ENCODE measurements at regions of chr4 and their contacts with region 1.

Region 1: GRCh38 chr4:13627606-13628301 is at the start of gene BOD1L1:
- DNase-seq: peak; percentile 81 to 88
- H3K4me3 ChIP-seq: peak within 1 kb of the TSS; percentile 72
- H3K4me3 Mint-ChIP-seq: peak within 1 kb of the TSS; percentile 92
- H3K27ac Mint-ChIP-seq: peak within 1 kb of the TSS; percentile 76
- H3K4me1 ChIP-seq: 0 out of 2 replicates have a peak, but pooled peaks cover 5% of the 10 kb centered on the region
- H3K4me1 Mint-ChIP-seq: peaks cover 8% of the 10 kb centered on the region
- H3K27me3 ChIP-seq: no peaks in the 10 kb centered on the region
- H3K27me3 Mint-ChIP-seq: no peaks in the 10 kb centered on the region
- CTCF ChIP-seq: peak in 1 of 2 experiments; percentile 49
- total RNA-seq, gene BOD1L1: 36.1 and 37.2 TPM in 2 replicates

Region 2: DNA sequence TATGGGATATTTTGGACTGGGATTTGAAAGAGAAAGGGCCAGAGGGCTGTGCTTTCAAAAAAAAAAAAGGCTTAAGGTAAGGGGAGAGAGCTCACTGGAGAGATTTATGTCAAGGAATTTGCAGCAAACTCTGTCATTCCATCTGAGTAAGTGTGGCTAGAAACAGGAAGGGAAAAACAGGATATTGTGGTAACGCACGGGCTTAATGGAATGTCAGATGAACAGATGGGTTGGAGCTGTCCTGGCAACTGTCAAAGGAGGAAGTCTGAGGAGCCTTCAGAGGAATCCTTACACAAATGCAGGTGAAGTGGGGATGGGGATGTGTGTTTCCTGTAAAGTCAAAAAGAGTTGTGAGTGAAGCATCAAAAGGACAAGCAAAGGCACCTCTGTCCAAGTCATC is 68.3 kb before region 1 on chr4:
- CTCF ChIA-PET with region 1: no interaction called
- POLR2A ChIA-PET with region 1: no interaction called
- intact Hi-C with region 1: no loop called
- DNase-seq: no peak
- H3K4me3 ChIP-seq: no peak overlapping the region
- H3K4me3 Mint-ChIP-seq: no peak overlapping the region
- H3K27ac Mint-ChIP-seq: no peak overlapping the region
- H3K4me1 ChIP-seq: no peaks in the 10 kb centered on the region
- H3K4me1 Mint-ChIP-seq: no peaks in the 10 kb centered on the region
- H3K27me3 ChIP-seq: no peaks in the 10 kb centered on the region
- H3K27me3 Mint-ChIP-seq: no peaks in the 10 kb centered on the region
- CTCF ChIP-seq: no peak

Region 3: DNA sequence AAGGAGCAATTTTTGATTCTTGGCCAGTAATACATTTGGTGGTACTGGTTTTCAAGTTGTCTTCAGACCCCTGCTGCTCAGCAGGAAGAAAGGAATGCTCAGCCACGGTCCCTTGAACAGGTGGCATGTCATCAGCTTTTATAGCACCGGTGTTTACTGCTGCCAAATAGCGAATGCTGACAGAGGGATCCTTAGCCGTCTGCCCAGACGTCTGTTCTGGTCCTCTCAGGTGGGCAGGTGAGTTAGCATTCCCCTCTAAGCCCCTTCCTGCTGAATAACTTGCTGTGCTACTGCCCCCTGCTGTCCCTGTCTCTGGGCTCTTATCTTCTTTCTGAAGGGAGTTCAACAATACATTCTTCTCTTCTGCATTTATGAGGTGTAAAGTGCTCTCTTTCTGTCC is 28.6 kb before region 1 on chr4:
- CTCF ChIA-PET with region 1: no interaction called
- POLR2A ChIA-PET with region 1: no interaction called
- intact Hi-C with region 1: loop called (anchors 1 kb)
- DNase-seq: peak in 1 of 2 experiments; percentile 18
- H3K4me3 ChIP-seq: no peak overlapping the region
- H3K4me3 Mint-ChIP-seq: no peak overlapping the region
- H3K27ac Mint-ChIP-seq: no peak overlapping the region
- H3K4me1 ChIP-seq: peaks cover 34% of the 10 kb centered on the region
- H3K4me1 Mint-ChIP-seq: peaks cover 10% of the 10 kb centered on the region
- H3K27me3 ChIP-seq: no peaks in the 10 kb centered on the region
- H3K27me3 Mint-ChIP-seq: no peaks in the 10 kb centered on the region
- CTCF ChIP-seq: peak; percentile 11 to 22

Region 4: DNA sequence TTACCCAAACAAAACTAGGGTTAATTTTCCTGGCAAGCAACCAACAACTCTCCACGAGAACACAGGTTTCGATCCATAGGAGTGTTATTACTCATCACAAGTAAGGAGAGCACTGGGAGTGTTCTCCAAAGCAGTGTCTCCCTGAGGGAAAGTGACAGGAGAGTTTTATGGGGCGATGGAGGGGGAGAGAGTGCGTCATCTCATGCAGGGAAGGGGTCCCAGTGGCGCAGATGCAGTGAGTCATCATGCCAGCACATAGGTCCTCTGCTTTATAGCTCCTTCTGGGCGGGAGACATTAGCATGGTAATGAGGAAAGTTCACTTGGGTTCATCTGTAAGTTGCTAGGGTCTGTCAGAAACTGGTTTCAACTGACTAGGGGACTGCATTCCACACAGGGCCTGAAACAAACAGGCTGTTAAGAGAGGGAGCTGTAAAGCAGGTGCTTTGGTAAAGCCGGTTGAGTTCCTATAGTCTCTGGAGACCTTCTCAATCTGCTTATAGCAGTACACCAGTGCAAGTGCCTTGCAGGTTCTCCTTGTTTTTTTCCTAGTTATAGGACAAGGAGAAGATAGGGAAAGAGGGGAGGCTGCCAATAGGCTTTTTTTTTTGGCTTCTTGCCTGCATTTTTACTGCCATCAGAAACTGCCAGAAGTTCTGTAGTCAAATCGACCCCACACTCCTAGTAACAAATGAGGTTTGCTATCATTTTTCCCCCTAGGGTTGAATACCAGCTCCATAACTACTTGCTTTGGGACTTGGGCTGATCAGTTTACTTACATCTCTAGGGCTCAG is 12.6 kb after region 1 on chr4:
- CTCF ChIA-PET with region 1: no interaction called
- POLR2A ChIA-PET with region 1: no interaction called
- intact Hi-C with region 1: loop called (anchors 1 kb)
- DNase-seq: peak; percentile 27 to 36
- H3K4me3 ChIP-seq: no peak overlapping the region
- H3K4me3 Mint-ChIP-seq: peak overlapping the region; percentile 50
- H3K27ac Mint-ChIP-seq: no peak overlapping the region
- H3K4me1 ChIP-seq: no peaks in the 10 kb centered on the region
- H3K4me1 Mint-ChIP-seq: no peaks in the 10 kb centered on the region
- H3K27me3 ChIP-seq: no peaks in the 10 kb centered on the region
- H3K27me3 Mint-ChIP-seq: peaks cover 15% of the 10 kb centered on the region
- CTCF ChIP-seq: no peak